Motor neuron (in vitro differentiated cells): ENCODE measurements at regions of chr3 and their contacts with region 1.

Region 1: GRCh38 chr3:45656575-45657363 is 32.4 kb upstream of the SACM1L start:
- ATAC-seq: peak; percentile 50 to 98 (median 76)
- H3K4me3 ChIP-seq: no peak overlapping the region
- H3K27ac ChIP-seq: no peak overlapping the region
- H3K4me1 ChIP-seq: no peaks in the 10 kb centered on the region

Region 2: GRCh38 chr3:45224824-45225464 is 431.8 kb before region 1 on chr3:
- in situ Hi-C with region 1: loop called in 2 of 9 experiments (anchors 25 kb)
- ATAC-seq: peak; percentile 74 to 85 (median 79)
- H3K4me3 ChIP-seq: peak overlapping the region; percentile 51 to 94 (median 57)
- H3K27ac ChIP-seq: no peak overlapping the region
- H3K4me1 ChIP-seq: peaks cover 13 to 22% of the 10 kb centered on the region in 2 donors

Region 3: DNA sequence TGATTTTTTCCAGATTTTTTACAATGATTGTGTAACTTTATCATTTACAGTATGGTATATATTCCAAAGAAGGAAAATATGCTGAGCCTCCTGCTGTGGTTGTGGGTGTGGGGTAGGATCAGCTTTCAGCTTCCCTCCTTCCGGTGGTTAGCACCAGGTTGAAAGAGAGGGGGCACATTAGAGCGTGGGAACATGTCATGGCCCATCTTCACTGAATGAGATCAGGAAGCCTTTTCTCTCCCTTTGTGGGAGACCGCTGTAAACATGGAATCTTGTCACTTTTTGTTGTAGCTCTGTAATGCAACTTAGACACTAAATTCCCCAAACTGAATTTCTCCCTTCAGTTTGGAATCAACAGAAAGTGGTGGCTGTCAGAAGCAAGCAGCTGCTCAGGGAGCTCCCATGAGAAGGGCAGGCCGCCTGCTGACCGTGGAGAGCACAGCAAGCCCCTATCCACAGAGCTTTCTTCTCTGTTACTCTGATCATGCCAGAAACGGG is 148.9 kb before region 1 on chr3:
- in situ Hi-C with region 1: loop called in 3 of 9 experiments (anchors 5 to 10 kb)
- ATAC-seq: peak in 7 of 8 experiments; percentile 3 to 70 (median 33)
- H3K4me3 ChIP-seq: no peak overlapping the region
- H3K27ac ChIP-seq: peak overlapping the region; percentile 71 to 73
- H3K4me1 ChIP-seq: peaks cover 24 to 30% of the 10 kb centered on the region in 2 donors

Region 4: DNA sequence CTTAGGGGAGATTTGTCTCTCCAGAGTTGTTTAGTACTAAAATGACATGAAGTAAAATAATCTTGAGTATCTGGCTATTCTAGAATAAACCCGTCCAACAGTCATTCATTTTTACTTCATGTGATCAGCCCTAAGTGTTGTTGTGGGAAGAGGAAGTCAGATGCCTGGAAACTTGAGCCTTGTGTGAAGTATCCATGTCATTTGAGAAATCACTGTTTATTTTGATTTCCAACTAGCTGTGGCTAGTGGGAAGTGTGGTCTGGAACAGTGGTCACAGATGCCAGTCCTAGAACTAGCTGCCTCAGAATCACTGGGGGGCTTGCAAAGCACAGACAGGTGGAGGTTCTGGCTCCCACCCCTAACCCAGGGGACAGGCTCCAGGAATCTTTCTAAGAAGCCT is 139.9 kb before region 1 on chr3:
- in situ Hi-C with region 1: loop called in 2 of 9 experiments (anchors 5 to 10 kb)
- ATAC-seq: peak in 1 of 8 experiments; percentile 34
- H3K4me3 ChIP-seq: no peak overlapping the region
- H3K27ac ChIP-seq: no peak overlapping the region
- H3K4me1 ChIP-seq: peaks cover 7 to 9% of the 10 kb centered on the region in 2 donors